ENCODE measurements at regions of chr5 and their contacts with region 1.

Region 1: DNA sequence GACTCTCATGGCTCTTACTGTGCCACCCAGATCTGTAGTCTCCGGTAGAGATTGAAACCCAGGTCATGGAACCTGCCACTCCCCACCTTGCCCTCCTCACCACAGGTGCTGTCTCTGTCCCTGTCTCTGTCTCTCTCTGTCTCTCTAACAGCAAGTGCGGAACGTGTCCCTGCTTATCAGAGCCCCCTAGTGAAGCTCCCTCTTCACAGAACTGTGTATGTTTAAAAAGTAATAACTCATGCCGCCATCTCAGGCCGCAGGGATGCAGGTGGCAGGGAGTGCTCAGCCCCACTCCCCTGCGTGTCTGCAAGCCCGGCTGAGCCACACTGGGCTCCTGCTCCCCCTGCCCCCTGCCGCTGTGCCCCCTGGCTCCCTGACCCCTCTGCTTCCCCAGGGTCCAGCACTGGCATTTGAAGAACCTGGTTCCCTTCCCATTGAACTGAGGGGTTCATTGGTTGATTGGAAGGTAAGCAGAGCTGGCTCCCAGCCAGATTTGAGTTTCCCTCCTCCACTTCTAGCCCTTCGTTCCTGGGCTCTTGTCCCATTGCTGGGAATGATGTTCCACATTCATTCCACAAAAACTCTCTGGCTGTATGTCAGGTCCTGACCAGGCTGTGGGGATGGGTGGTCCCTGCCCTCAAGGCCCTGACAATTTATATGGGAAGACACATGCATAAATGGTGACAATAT is 44.0 kb downstream of the UNC5A start:
- DNase-seq: no peak

Region 2: DNA sequence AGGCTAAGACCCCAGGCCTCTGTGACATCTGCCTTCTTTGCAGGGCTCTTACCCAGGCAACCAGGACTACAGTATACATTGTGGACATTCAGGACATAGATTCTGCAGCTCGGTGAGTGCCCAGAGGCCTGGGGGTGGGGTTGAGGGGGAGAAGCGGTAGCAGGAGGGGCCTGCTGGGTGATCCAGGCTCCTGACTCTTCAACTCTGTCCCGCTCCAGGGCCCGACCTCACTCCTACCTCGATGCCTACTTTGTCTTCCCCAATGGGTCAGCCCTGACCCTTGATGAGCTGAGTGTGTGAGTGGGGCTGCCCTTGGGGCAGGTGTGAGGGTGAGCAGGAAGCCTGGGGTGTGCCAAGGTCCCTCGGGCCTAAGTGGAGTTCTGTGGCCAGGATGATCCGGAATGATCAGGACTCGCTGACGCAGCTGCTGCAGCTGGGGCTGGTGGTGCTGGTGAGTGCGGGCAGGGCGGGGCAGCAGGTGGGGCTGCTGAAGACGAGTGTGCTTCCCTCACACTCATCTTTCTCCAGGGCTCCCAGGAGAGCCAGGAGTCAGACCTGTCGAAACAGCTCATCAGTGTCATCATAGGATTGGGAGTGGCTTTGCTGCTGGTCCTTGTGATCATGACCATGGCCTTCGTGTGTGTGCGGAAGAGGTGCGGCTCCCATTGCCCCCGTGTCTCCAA is 264.1 kb before region 1 on chr5:
- intact Hi-C with region 1: no loop called
- DNase-seq: no peak

Region 3: GRCh38 chr5:176784218-176785165 is 69.8 kb before region 1 on chr5:
- intact Hi-C with region 1: no loop called
- DNase-seq: peak; percentile 35

Region 4: GRCh38 chr5:176895831-176896391 is 41.6 kb after region 1 on chr5:
- intact Hi-C with region 1: loop called in 1 of 2 experiments (anchors 1 kb)
- DNase-seq: no peak

Measured in posterior vena cava (tissue), 2 donors.